Activated CD4-positive, alpha-beta T cell treated with anti-CD3 and anti-CD28 coated beads, Interleukin-2, amount 10 ng/mL, durations not matched to agents 24 days and 14 days (primary cell): ENCODE measurements at regions of chr6 and their contacts with region 1.

Region 1: DNA sequence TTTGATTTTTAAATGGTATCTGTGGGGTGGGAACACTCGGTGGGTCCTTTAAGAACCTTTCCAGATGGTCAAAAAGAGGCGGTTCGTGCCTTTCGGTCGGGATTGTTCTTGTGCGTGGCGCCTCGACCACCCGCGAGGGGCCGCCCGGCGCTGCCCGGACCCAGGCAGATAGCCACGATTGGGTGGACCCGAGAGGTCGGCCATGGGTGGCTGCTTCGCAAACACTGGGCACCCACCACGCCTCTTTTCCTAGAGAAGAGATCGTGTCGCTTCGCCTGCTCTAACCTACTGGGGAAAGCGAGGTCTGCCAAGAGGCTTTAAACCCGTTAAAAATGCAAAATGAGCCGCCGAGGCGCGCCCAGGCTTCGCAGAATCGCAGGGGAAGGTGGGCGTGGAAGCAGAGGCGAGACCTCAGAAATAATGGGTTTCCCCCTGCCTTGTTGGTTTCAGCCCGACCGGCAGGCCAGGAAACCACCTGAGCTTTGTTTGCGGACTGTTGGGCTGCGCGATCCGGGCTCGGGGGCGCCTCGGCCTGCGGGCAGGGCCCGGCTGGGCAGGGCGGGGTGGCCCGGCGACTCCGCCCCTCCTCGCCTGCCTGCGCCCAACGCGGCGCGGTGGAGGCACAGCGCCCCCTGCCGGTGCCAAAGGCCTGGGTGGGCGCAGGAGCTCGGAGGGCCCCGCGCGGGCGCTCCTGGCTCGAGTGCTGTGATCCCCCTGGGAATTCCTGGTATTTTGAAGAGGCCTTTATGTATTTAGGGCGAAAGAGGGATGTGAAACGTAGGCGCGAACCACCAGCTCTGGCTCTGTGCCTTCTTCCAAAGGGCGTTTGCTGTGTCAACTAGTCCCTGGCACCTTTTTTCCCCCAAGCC is 1.6 kb downstream of the MARCKS start:
- DNase-seq: peak; percentile 94
- H3K4me3 Mint-ChIP-seq: peak overlapping the region; percentile 67
- H3K27ac Mint-ChIP-seq: peak overlapping the region; percentile 42
- H3K4me1 Mint-ChIP-seq: peaks cover 17% of the 10 kb centered on the region
- H3K27me3 Mint-ChIP-seq: peaks cover 42% of the 10 kb centered on the region

Region 2: GRCh38 chr6:112180095-112180820 is 1678.5 kb before region 1 on chr6:
- intact Hi-C with region 1: loop called (anchors 2 kb)
- DNase-seq: peak; percentile 86
- H3K4me3 Mint-ChIP-seq: no peak overlapping the region
- H3K27ac Mint-ChIP-seq: no peak overlapping the region
- H3K4me1 Mint-ChIP-seq: no peaks in the 10 kb centered on the region
- H3K27me3 Mint-ChIP-seq: peaks cover 41% of the 10 kb centered on the region

Region 3: DNA sequence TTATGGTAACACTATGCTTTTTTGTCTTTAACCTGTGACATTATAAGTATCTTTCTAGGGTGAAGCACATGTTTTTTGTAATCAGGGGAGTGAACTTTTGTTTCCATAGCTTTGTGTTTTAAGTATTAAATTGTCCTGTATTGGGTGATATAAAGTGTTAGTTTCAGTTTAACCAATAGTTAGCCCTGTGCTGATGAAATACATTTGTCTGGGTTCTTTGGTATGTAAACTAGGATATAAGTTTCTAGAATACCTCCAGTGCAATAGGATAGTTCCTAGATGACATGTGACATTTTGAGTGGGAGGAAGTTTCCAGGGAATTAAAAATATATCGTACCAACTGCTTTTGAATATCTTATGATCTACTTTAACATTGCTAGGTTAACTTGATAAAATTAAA is 612.5 kb before region 1 on chr6:
- intact Hi-C with region 1: no loop called
- DNase-seq: no peak
- H3K4me3 Mint-ChIP-seq: no peak overlapping the region
- H3K27ac Mint-ChIP-seq: no peak overlapping the region
- H3K4me1 Mint-ChIP-seq: no peaks in the 10 kb centered on the region
- H3K27me3 Mint-ChIP-seq: no peaks in the 10 kb centered on the region

Region 4: DNA sequence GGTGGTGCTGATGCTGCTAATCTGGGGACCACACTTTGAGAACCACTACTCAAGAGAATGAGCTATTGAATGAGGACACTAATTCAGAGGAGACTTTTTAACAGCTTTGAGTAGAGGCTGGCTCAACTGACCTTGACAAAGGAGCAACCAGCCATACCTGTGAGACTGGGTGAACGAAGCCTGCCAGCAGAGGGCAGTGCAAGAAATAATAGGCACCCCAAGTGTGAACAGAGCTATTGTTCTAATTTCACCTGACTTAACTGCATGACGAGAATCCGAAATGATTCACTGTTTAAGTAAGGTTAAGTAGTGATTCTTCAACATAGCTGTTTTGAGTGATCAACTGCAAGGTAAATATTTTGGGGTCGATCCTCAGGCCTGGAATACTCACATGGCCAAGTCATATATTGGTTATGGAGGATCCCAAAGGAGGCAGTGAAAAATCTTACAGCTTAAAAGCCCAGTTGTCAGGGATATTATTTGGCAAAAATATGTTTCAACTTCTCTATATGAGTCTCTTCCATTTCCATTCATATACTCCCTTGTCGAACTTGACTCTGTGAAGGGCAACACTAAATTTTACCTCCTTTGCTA is 552.1 kb before region 1 on chr6:
- intact Hi-C with region 1: loop called (anchors 1 kb)
- DNase-seq: peak; percentile 80
- H3K4me3 Mint-ChIP-seq: no peak overlapping the region
- H3K27ac Mint-ChIP-seq: no peak overlapping the region
- H3K4me1 Mint-ChIP-seq: no peaks in the 10 kb centered on the region
- H3K27me3 Mint-ChIP-seq: no peaks in the 10 kb centered on the region

Region 5: GRCh38 chr6:113632220-113632864 is 226.4 kb before region 1 on chr6:
- intact Hi-C with region 1: loop called (anchors 5 kb)
- DNase-seq: peak; percentile 57
- H3K4me3 Mint-ChIP-seq: no peak overlapping the region
- H3K27ac Mint-ChIP-seq: no peak overlapping the region
- H3K4me1 Mint-ChIP-seq: peaks cover 15% of the 10 kb centered on the region
- H3K27me3 Mint-ChIP-seq: peaks cover 14% of the 10 kb centered on the region

Region 6: GRCh38 chr6:113690281-113691259 is 168.1 kb before region 1 on chr6:
- intact Hi-C with region 1: no loop called
- DNase-seq: no peak
- H3K4me3 Mint-ChIP-seq: no peak overlapping the region
- H3K27ac Mint-ChIP-seq: no peak overlapping the region
- H3K4me1 Mint-ChIP-seq: peaks cover 4% of the 10 kb centered on the region
- H3K27me3 Mint-ChIP-seq: no peaks in the 10 kb centered on the region

Region 7: GRCh38 chr6:113909234-113909856 is 50.6 kb after region 1 on chr6:
- intact Hi-C with region 1: no loop called
- DNase-seq: peak; percentile 67
- H3K4me3 Mint-ChIP-seq: no peak overlapping the region
- H3K27ac Mint-ChIP-seq: no peak overlapping the region
- H3K4me1 Mint-ChIP-seq: peaks cover 2% of the 10 kb centered on the region
- H3K27me3 Mint-ChIP-seq: peaks cover 18% of the 10 kb centered on the region